ENCODE measurements at regions of chr3 and their contacts with region 1.

Region 1: GRCh38 chr3:197283045-197283444 is 15.4 kb downstream of the DLG1 start:
- DNase-seq: no peak
- ATAC-seq: no peak
- H3K4me3 ChIP-seq: no peak overlapping the region
- H3K27ac ChIP-seq: no peak overlapping the region
- H3K4me1 ChIP-seq: peaks cover 14% of the 10 kb centered on the region
- CTCF ChIP-seq: no peak
- EP300 ChIP-seq: no peak
- POLR2A ChIP-seq: no peak
- RAD21 ChIP-seq: no peak

Region 2: GRCh38 chr3:197308591-197308990 is 25.5 kb after region 1 on chr3:
- CTCF ChIA-PET with region 1: no interaction called
- POLR2A ChIA-PET with region 1: interaction called, 11 read pairs
- DNase-seq: no peak
- ATAC-seq: no peak; a peak in 1 of 6 replicates
- H3K4me3 ChIP-seq: no peak overlapping the region
- H3K27ac ChIP-seq: peak overlapping the region; percentile 52 to 80
- H3K4me1 ChIP-seq: peaks cover 35% of the 10 kb centered on the region
- CTCF ChIP-seq: no peak
- EP300 ChIP-seq: no peak
- POLR2A ChIP-seq: no peak
- RAD21 ChIP-seq: no peak